ENCODE measurements at regions of chr20 and their contacts with region 1.

Region 1: DNA sequence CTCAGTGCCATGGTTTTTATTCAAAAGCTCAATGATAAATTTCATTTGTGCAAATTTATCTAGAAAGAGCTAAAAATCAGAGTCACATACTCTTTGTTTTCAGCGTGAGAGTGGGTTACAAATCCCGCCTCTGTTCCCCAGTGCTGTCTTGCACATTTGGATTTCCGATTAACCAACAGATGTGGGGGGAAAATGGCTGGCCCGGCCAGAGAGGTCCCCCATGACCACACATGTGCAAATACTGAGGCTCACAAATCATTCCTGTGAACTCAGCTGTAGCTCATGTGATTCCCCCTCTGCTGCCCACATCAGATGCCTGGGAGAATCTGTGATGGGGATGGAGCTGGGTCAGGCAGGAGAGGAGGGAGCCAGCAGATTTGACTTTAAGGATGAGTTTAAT is 168.7 kb downstream of the PAX1 start:
- DNase-seq: no peak
- H3K4me3 ChIP-seq: no peak overlapping the region
- H3K27ac ChIP-seq: no peak overlapping the region
- H3K4me1 ChIP-seq: no peaks in the 10 kb centered on the region
- H3K27me3 ChIP-seq: no peaks in the 10 kb centered on the region
- CTCF ChIP-seq: no peak

Region 2: GRCh38 chr20:21240394-21240793 is 633.7 kb before region 1 on chr20:
- intact Hi-C with region 1: no loop called
- DNase-seq: no peak
- H3K4me3 ChIP-seq: no peak overlapping the region
- H3K27ac ChIP-seq: no peak overlapping the region
- H3K4me1 ChIP-seq: peaks cover 14% of the 10 kb centered on the region
- H3K27me3 ChIP-seq: no peaks in the 10 kb centered on the region
- CTCF ChIP-seq: no peak

Region 3: GRCh38 chr20:21921251-21921650 is 47.1 kb after region 1 on chr20:
- intact Hi-C with region 1: no loop called
- DNase-seq: no peak
- H3K4me3 ChIP-seq: no peak overlapping the region
- H3K27ac ChIP-seq: no peak overlapping the region
- H3K4me1 ChIP-seq: no peaks in the 10 kb centered on the region
- H3K27me3 ChIP-seq: no peaks in the 10 kb centered on the region
- CTCF ChIP-seq: no peak

Region 4: DNA sequence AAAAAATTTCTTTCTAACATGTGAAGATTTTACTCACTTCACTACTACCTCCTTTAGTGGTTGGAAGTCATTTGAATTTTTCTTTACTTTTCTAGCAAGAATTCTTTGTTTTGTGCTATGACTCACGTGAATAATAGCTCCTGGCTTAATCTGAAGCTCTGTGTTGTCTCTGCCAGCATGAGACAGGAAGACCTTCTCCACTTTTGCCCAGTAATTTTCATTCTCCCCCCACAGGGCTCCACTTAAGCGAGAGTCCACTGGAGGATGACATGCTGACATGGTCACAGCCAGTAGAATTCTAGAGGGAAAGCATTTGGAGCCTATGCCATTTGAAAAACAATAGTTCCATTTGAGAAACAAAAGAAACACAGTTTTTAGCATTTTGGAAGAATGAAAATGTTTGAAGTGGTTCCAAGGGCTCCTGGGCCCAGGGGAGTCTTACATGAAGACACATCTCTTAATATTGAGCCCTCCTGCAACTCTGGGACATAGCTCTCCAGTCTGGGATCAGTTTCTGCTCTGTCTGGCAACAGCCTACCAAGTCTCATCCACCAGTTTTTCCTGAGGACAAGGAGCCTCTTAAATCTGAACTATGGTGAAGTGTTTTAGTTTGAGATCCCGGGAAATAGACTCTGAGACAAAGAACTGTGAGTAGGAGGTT is 62.7 kb after region 1 on chr20:
- intact Hi-C with region 1: loop called (anchors 10 kb)
- DNase-seq: no peak
- H3K4me3 ChIP-seq: no peak overlapping the region
- H3K27ac ChIP-seq: no peak overlapping the region
- H3K4me1 ChIP-seq: no peaks in the 10 kb centered on the region
- H3K27me3 ChIP-seq: no peaks in the 10 kb centered on the region
- CTCF ChIP-seq: no peak